ENCODE measurements at regions of chr22 and their contacts with region 1.

Region 1: DNA sequence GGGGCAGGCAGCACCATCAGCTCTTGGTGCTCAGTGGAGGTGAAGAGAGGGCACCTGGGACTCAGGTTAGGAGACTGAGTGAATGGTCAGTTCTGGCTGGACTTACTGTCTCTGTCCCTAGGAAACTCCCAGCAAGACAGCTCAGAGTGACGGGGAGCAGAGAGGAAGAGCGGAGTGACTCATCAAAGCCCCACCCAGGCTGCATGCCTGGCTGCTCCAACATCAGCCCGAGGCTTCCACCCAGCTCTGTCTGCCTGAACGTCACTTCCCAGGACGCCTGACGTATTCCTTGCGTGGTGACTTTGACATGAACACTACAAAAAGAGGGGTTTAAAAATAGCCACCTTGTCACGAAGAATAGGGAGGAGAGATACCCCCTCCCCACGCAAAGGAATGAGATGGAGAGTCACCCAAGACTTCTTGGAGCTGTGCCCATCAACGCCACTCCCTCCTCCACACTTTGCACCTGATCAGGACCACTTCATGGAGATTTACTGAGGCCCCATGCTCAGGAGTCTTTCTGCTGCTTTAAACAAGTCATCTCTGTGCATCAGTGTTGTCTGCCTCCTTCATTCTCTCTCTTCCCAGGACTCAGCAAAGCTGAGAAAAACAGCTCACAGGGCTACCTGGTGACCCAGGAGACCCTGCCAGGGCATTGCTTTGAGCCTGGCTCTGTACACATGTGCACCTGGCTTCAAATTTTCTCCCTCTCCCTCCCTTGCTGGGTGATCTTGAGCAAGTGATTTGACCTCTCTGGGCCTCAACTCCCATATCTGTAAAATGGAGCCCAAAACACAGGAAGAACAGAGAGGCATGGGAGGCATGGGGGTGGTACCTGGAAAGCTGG is 83.1 kb downstream of the MN1 start:
- DNase-seq: peak; percentile 89 to 96 (median 94)
- H3K4me3 ChIP-seq: no peak overlapping the region
- H3K4me3 Mint-ChIP-seq: peak overlapping the region in 1 of 2 donors; percentile 56
- H3K27ac ChIP-seq: peak overlapping the region; percentile 32 to 70
- H3K27ac Mint-ChIP-seq: peak overlapping the region; percentile 88 to 98 (median 93)
- H3K4me1 ChIP-seq: peaks cover 23 to 25% of the 10 kb centered on the region in 2 donors
- H3K4me1 Mint-ChIP-seq: peaks cover 31% of the 10 kb centered on the region
- H3K27me3 ChIP-seq: no peaks in the 10 kb centered on the region
- H3K27me3 Mint-ChIP-seq: peaks cover 0 to 10% (median 1%) of the 10 kb centered on the region in 3 donors
- CTCF ChIP-seq: no peak

Region 2: DNA sequence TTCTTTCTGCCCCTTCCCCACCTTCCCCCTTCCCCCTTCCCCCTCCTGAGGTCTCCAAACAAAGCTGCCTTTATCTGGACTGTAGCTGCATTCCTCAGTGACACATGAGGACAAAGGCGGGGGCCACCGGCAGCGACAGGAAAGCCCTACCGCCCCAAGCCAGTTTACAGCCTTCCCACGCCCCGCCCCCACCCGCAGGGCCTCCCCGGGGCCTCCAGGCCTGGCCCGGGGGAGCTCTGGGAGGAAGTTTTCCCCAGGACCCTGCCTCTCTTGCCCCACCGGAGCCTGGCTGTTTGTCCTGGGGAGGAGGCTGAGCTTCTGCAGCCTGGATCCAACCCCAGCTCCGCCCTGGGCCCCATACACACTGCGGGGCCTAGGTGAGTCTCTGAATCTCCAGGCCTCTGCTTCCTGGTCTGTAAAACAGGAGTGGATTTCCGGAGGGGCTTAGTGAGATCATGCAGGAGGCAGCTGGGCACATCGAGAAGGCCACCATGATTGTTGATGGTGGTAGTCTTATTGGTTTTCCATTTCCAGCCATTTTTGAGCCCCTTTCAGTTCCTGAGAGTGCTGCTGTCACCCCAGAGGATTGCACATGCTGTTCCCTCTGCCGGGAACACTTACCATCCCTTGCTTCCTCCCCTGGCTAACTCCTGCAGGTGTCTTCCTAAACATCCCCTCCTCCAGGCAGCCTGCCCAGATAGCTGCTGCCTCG is 47.6 kb before region 1 on chr22:
- intact Hi-C with region 1: loop called (anchors 5 kb)
- DNase-seq: peak; percentile 29 to 47 (median 37)
- H3K4me3 ChIP-seq: no peak overlapping the region
- H3K4me3 Mint-ChIP-seq: no peak overlapping the region
- H3K27ac ChIP-seq: peak overlapping the region; percentile 0 to 61
- H3K27ac Mint-ChIP-seq: peak overlapping the region; percentile 58 to 97 (median 90)
- H3K4me1 ChIP-seq: peaks cover 37 to 38% of the 10 kb centered on the region in 2 donors
- H3K4me1 Mint-ChIP-seq: peaks cover 42% of the 10 kb centered on the region
- H3K27me3 ChIP-seq: no peaks in the 10 kb centered on the region
- H3K27me3 Mint-ChIP-seq: peaks cover 0 to 3% (median 1%) of the 10 kb centered on the region in 3 donors
- CTCF ChIP-seq: no peak

Region 3: GRCh38 chr22:27740192-27740748 is 21.9 kb after region 1 on chr22:
- intact Hi-C with region 1: no loop called
- DNase-seq: no peak
- H3K4me3 ChIP-seq: no peak overlapping the region
- H3K4me3 Mint-ChIP-seq: no peak overlapping the region
- H3K27ac ChIP-seq: no peak overlapping the region
- H3K27ac Mint-ChIP-seq: no peak overlapping the region
- H3K4me1 ChIP-seq: no peaks in the 10 kb centered on the region
- H3K4me1 Mint-ChIP-seq: no peaks in the 10 kb centered on the region
- H3K27me3 ChIP-seq: no peaks in the 10 kb centered on the region
- H3K27me3 Mint-ChIP-seq: peaks cover 0 to 2% (median 1%) of the 10 kb centered on the region in 3 donors
- CTCF ChIP-seq: no peak

Region 4: DNA sequence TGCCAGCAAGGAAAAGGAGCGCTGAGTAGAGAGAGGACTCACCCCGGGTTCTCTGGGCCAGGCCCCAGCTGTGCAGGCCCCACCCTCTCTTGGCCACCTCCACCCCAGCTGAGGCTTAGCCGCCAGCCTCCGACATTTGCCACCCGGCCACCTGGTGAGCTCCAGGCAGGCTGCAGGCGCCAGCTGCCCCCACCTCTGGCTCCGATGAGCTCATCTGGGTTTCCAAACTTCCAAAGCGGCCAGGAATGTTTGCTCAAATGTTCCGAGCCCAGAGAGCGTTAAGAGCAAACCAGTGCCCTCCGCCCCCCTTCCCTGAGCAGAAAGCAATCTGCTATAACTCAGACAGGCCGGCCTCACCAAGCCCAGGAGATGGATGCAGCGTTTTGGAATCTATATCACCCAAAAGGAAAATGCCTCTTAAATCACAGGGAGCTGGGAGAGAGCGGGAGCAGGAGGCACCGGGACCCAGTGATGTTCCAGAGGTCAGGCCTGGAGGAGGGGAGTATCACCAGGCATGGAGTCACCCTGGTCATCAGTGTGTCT is 92.3 kb after region 1 on chr22:
- intact Hi-C with region 1: no loop called
- DNase-seq: no peak
- H3K4me3 ChIP-seq: no peak overlapping the region
- H3K4me3 Mint-ChIP-seq: no peak overlapping the region
- H3K27ac ChIP-seq: no peak overlapping the region
- H3K27ac Mint-ChIP-seq: no peak overlapping the region
- H3K4me1 ChIP-seq: no peaks in the 10 kb centered on the region
- H3K4me1 Mint-ChIP-seq: no peaks in the 10 kb centered on the region
- H3K27me3 ChIP-seq: no peaks in the 10 kb centered on the region
- H3K27me3 Mint-ChIP-seq: peaks cover 1 to 20% (median 7%) of the 10 kb centered on the region in 3 donors
- CTCF ChIP-seq: no peak